ENCODE measurements at regions of chr12 and their contacts with region 1.

Region 1: DNA sequence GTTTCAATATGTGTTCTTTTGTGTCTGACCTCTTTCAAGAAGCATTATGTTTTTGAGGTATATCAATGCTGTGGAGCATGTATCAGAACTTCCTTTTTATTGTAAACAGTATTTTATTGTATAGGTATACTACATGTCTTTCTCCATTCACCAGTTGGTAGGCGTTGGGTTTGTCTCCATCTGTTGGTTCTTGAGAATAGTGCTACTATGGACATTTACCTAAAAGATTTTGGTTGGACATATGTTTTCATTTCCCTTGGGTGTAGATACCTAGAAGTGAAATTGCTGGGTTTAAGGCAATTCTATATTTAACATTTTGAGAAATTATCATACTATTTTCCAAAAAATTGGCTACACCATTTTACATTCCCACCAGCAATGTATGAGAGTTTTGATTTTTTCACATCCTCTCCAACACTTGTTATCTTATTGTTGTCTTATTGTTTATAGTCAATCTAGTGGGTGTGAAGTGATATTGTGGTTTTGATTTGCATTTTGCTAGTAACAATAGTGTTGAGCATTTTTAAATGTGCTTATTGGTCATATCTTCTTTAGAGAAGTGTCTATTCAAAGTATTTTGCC is 409.2 kb downstream of the IPO8 start:
- DNase-seq: no peak
- ATAC-seq: no peak
- H3K4me3 ChIP-seq: no peak overlapping the region
- H3K27ac ChIP-seq: no peak overlapping the region
- H3K4me1 ChIP-seq: no peaks in the 10 kb centered on the region
- H3K27me3 ChIP-seq: no peaks in the 10 kb centered on the region
- CTCF ChIP-seq: peak; percentile 51

Region 2: GRCh38 chr12:29519585-29520182 is 766.8 kb before region 1 on chr12:
- intact Hi-C with region 1: loop called in 1 of 2 experiments (anchors 2 kb)
- DNase-seq: no peak
- ATAC-seq: peak in 1 of 4 donors; percentile 55
- H3K4me3 ChIP-seq: no peak overlapping the region
- H3K27ac ChIP-seq: no peak overlapping the region
- H3K4me1 ChIP-seq: peaks cover 13% of the 10 kb centered on the region
- H3K27me3 ChIP-seq: no peaks in the 10 kb centered on the region
- CTCF ChIP-seq: peak; percentile 70

Region 3: DNA sequence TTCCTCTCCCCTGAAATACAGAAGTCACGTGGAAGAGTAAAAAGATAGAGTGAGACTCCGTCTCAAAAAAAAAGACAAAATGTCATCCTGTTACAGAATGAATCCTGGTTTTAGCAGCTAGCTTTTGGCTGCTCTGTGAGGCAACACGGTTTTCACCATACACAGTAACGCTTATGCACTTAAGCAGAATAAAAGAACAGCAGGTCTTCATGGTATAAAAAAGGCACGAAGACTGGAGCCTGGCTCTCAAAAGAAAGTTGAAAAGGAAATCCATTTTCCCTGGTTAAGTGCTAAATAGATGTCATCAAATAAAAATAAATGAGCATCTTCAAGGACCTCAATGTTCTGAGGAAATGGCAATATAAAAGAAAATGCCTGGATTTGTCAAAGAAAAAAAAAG is 34.9 kb before region 1 on chr12:
- intact Hi-C with region 1: no loop called
- DNase-seq: no peak
- ATAC-seq: no peak
- H3K4me3 ChIP-seq: no peak overlapping the region
- H3K27ac ChIP-seq: no peak overlapping the region
- H3K4me1 ChIP-seq: no peaks in the 10 kb centered on the region
- H3K27me3 ChIP-seq: no peaks in the 10 kb centered on the region
- CTCF ChIP-seq: no peak